ENCODE measurements at regions of chr1 and their contacts with region 1.

Region 1: DNA sequence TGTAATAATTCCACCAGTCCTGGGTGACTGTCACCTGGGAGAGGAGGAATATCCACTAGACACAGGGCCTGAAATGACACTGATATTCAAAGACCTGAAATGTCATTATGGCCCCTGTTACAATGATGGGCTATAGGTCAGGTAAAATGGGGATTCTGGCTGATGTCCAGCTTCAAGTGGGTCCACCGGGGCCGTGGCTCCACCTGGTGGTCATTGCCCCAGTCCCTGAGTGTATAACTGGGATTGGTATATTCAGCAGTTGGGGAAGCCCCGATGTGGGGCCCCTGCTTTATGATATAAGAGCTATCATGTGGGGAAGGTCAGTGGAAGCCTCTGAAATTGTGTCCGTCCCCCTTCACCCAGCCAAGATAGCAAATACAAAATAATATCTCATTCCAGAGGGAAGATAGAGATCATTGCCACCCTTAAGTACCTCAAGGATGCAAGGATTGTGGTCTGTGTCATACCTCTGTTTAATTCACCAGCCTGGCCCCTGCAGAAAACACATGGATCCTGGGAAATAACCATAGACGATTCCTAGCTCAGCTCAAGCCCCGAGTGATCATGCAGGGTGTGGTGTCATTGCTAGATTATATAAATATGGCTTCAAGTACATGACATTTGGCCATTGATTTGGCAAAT is 19.4 kb downstream of the PLEKHO1 start:
- DNase-seq: peak; percentile 64
- H3K4me3 ChIP-seq: no peak overlapping the region
- H3K27ac ChIP-seq: no peak overlapping the region
- H3K4me1 ChIP-seq: no peaks in the 10 kb centered on the region
- H3K27me3 ChIP-seq: no peaks in the 10 kb centered on the region
- CTCF ChIP-seq: peak; percentile 83 to 85
- POLR2A ChIP-seq: no peak

Region 2: GRCh38 chr1:150067184-150068036 is 101.7 kb before region 1 on chr1 and contains the start of gene VPS45:
- CTCF ChIA-PET with region 1: interaction called, 165 read pairs
- POLR2A ChIA-PET with region 1: no interaction called
- dilution Hi-C with region 1: no loop called
- intact Hi-C with region 1: no loop called
- DNase-seq: peak; percentile 93
- H3K4me3 ChIP-seq: peak within 1 kb of the TSS; percentile 45 to 85 (median 72)
- H3K27ac ChIP-seq: peak within 1 kb of the TSS; percentile 53
- H3K4me1 ChIP-seq: peaks cover 24% of the 10 kb centered on the region
- H3K27me3 ChIP-seq: no peaks in the 10 kb centered on the region
- CTCF ChIP-seq: peak; percentile 18 to 36
- POLR2A ChIP-seq: no peak
- total RNA-seq, gene VPS45: 40.4 and 43.7 TPM in 2 replicates

Region 3: DNA sequence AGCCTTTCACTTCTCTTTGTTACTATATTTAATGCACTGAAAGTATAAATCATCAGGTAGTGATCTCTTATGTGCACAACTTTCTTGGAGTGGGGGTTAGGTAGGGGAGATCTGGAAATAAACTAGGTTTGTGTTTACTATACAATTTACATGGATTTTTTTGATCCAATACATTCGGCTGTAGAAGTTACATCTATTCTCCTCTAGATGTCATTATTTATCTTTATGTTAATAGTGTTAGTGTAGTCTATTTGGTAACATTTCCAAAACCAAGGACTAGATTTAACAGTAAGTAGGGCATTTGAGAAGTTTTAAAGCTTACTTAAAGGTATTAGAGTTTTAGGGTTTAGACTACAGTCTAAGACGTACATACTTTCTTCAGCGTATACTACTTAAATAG is 96.1 kb before region 1 on chr1:
- CTCF ChIA-PET with region 1: interaction called, 165 read pairs
- POLR2A ChIA-PET with region 1: no interaction called
- dilution Hi-C with region 1: no loop called
- intact Hi-C with region 1: loop called (anchors 1 kb)
- DNase-seq: peak; percentile 40
- H3K4me3 ChIP-seq: no peak overlapping the region
- H3K27ac ChIP-seq: no peak overlapping the region
- H3K4me1 ChIP-seq: peaks cover 7% of the 10 kb centered on the region
- H3K27me3 ChIP-seq: no peaks in the 10 kb centered on the region
- CTCF ChIP-seq: peak in 1 of 2 donors; percentile 20
- POLR2A ChIP-seq: no peak

Region 4: DNA sequence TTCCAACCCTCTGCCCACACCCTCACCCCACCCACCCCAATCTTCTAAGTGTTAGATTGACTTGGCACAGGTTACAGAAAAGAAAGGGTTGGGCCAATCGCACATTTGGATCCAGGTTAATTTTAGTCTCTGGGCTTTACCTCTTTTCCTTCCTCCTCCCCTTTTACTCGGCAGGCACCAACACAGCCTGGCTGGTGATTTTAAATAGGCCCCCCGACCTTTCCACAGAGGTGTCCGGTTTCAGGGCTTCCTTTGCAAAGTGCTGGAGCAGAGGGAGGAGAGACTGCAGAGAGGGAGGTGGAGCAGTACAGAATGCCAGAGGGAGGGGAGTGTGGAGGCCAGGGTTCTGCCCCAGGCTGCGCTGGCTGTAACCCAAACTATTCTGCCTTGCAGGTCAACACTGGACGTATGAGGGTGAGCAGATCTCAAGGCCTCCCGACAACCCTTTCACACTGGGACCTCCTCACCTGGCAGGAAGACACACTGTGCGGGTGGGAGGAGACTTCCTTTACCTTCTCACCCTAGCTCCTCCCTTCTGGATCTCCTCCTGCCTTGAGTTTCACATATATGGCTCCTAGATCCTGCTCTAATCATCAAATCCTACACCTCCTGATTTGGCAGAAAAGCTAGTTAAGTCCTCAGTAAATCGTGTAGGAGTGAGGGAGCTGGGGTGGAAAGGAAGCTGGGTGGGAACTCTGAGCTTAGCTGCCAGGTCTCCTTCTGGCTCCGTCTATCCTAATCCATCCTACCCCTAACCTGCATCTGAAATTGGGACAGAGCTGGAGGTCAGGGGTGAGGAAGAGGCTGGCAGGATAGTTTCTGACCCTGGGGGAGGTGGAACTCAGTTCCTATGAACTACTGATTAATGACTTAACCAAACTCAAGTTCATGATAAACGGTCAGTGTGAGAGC is 90.9 kb after region 1 on chr1:
- CTCF ChIA-PET with region 1: no interaction called
- POLR2A ChIA-PET with region 1: no interaction called
- dilution Hi-C with region 1: no loop called
- intact Hi-C with region 1: no loop called
- DNase-seq: peak; percentile 9
- H3K4me3 ChIP-seq: no peak overlapping the region
- H3K27ac ChIP-seq: no peak overlapping the region
- H3K4me1 ChIP-seq: peaks cover 7% of the 10 kb centered on the region
- H3K27me3 ChIP-seq: peaks cover 15 to 27% of the 10 kb centered on the region in 2 experiments
- CTCF ChIP-seq: no peak
- POLR2A ChIP-seq: no peak

Region 5: DNA sequence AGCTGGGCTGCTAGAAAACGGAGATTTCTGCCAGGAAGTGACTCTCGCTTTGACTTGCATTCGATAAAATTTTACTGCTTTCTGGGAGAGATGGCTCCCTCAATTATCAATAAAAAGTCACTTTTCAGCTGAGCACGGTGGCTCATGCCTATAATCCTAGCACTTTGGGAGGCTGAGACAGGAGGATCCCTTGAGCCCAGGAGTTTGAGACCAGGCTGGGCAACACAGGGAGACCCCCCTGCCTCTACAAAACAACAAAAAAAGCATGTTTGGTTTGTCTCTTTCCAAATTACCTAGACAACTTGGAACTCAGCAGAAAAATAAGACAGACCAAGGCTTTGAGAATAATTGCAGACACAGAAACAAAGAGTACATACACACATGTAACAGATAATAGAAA is 473.2 kb after region 1 on chr1:
- CTCF ChIA-PET with region 1: no interaction called
- POLR2A ChIA-PET with region 1: no interaction called
- dilution Hi-C with region 1: no loop called
- intact Hi-C with region 1: no loop called
- DNase-seq: no peak
- H3K4me3 ChIP-seq: no peak overlapping the region
- H3K27ac ChIP-seq: no peak overlapping the region
- H3K4me1 ChIP-seq: no peaks in the 10 kb centered on the region
- H3K27me3 ChIP-seq: no peaks in the 10 kb centered on the region
- CTCF ChIP-seq: no peak
- POLR2A ChIP-seq: no peak

Measured in endothelial cell of umbilical vein (primary cell).